ENCODE measurements at regions of chr2 and their contacts with region 1.

Region 1: GRCh38 chr2:3423492-3424175 is 44.1 kb downstream of the TRAPPC12 start:
- DNase-seq: peak in 1 of 2 donors; percentile 82
- H3K4me3 ChIP-seq: no peak overlapping the region
- H3K27ac ChIP-seq: no peak overlapping the region
- H3K4me1 ChIP-seq: no peaks in the 10 kb centered on the region
- H3K27me3 ChIP-seq: no peaks in the 10 kb centered on the region
- CTCF ChIP-seq: peak; percentile 74 to 99 (median 99)

Region 2: DNA sequence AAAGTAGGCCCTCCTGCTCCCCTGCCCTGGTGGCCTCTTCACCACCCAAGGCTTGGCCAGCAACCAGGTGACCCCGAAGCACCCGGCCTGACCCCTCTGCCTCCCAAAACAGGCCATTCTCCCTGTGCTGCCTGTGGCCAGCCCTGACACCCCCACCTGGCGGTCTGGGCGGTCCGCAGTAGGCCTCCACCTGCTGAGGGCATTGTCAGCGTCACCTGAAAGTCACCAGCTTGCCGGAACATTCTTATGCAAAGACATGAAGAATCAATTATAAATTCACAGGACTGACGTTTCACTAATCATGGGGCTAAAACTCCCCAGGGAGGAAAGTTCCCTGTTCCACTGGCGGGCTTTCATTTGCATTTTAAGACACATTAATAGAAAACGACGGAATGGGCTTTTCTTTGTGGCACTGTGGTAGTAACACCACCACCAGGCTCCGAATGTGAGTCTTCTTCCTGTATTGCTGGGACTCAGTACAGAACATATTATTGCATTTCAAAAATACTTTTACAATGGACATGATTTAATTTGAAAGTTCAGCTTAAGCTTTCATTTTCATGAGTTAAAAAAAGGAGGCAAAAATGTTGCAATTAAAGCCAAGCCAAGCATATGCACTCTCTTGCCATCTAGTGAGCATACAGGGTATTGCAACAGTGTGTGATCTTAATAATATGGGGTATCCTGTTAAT is 38.3 kb after region 1 on chr2:
- intact Hi-C with region 1: loop called (anchors 2 kb)
- DNase-seq: peak in 1 of 2 donors; percentile 63
- H3K4me3 ChIP-seq: peak overlapping the region in 1 of 2 donors; percentile 32
- H3K27ac ChIP-seq: peak overlapping the region; percentile 78 to 90
- H3K4me1 ChIP-seq: peaks cover 6 to 7% of the 10 kb centered on the region in 2 donors
- H3K27me3 ChIP-seq: no peaks in the 10 kb centered on the region
- CTCF ChIP-seq: peak; percentile 54 to 97 (median 81)

Region 3: GRCh38 chr2:3651691-3652648 is 228.3 kb after region 1 on chr2:
- intact Hi-C with region 1: loop called (anchors 2 kb)
- DNase-seq: no peak
- H3K4me3 ChIP-seq: peak overlapping the region; percentile 17 to 55
- H3K27ac ChIP-seq: peak overlapping the region; percentile 13 to 37
- H3K4me1 ChIP-seq: peaks cover 3 to 5% of the 10 kb centered on the region in 2 donors
- H3K27me3 ChIP-seq: no peaks in the 10 kb centered on the region
- CTCF ChIP-seq: no peak

Measured in ascending aorta (tissue), 2 donors.